Dendritic cell treated with granulocyte-macrophage colony-stimulating factor and Interleukin-4, amounts not matched to agents 40 ng/mL and 50 ng/mL, for 4 days (primary cell): ENCODE measurements at regions of chr6 and their contacts with region 1.

Region 1: DNA sequence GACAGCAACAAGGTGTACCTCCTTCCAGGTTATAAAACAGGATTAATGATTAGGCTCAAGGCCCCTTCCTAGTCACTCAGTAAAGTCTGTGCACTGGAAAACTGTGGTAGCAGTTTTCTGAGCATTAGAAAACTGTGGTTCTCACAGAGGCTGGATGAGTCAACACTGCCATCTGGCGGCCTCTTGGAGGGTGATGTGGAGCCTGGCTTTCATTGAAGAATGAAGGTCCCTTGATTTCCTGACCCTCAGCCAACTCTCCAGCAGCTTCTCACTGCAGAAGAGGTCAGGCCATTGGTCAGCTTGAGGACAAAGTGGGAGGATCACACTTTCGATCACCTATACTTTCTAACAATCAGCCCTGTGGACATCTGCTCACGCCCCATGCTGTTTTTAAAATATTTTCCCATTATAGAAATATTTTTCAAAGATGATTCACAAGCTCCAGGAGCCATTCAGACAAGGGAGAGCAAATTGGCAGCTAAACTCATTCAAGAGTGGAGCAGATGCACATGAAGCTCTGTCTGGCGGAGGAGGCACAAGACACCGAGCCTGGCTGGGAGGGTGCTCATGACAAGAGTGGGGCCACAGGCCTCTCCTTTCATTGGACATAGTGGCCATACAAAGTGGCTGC is 23.2 kb downstream of the PSMB1 start:
- H3K4me3 Mint-ChIP-seq: no peak overlapping the region
- H3K27ac Mint-ChIP-seq: no peak overlapping the region
- H3K4me1 Mint-ChIP-seq: no peaks in the 10 kb centered on the region
- H3K27me3 Mint-ChIP-seq: no peaks in the 10 kb centered on the region

Region 2: DNA sequence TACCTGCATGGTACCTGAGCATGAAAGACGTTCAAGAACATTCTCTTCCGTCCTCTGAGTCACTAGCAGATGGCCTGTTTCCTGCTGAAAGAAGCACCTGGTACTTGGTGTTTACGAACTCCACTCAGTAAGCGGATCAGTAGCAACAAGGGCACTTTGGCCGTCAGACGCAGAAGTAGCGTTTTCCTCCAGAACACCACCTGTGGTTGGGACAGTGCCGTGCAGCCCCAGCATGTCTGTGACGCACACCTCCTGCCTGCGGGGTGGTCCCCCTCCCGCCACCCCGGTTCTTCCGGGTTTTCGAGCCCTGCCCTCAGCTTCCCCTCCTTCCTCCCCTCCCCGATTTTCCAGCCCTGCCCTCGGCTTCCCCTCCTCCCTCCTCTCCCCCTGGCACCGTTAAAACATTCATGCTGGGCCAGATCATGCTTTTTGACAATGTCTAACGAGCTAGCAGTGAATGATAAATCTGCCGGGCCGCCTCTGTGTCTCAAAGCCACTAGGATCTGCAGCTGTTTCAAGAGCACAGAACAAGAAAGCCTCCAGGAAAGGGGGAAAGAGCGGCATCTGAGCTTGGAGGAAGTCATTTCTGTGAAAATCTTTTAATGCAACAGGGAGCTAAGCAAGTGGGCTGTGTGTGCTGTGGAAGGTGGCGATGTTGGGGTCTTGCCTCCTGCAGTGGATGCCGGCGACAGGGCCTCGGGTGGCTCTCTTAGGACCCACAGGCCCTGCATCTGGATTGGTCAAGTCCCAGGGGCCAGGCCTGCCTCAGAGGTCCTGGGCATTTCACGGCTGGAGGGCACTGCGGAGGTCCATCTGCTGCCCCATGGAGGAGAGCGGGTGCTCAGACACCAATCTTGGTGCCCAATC is 570.6 kb before region 1 on chr6:
- intact Hi-C with region 1: loop called (anchors 10 kb)
- H3K4me3 Mint-ChIP-seq: peak overlapping the region; percentile 18
- H3K27ac Mint-ChIP-seq: peak overlapping the region; percentile 24
- H3K4me1 Mint-ChIP-seq: peaks cover 20% of the 10 kb centered on the region
- H3K27me3 Mint-ChIP-seq: peaks cover 31% of the 10 kb centered on the region

Region 3: GRCh38 chr6:170545405-170545804 is 15.5 kb after region 1 on chr6:
- intact Hi-C with region 1: no loop called
- H3K4me3 Mint-ChIP-seq: no peak overlapping the region
- H3K27ac Mint-ChIP-seq: no peak overlapping the region
- H3K4me1 Mint-ChIP-seq: peaks cover 10% of the 10 kb centered on the region
- H3K27me3 Mint-ChIP-seq: no peaks in the 10 kb centered on the region